Common myeloid progenitor, CD34-positive (primary cell): ENCODE measurements at regions of chr14 and their contacts with region 1.

Region 1: GRCh38 chr14:35121887-35122695 is at the starts of genes PPP2R3C and PRORP:
- DNase-seq: peak; percentile 95 to 99 (median 97)
- H3K4me3 ChIP-seq: peak within 1 kb of the TSS; percentile 50 to 98 (median 92)
- H3K27ac ChIP-seq: peak within 1 kb of the TSS; percentile 99 to 100
- H3K4me1 ChIP-seq: peaks cover 7 to 29% (median 24%) of the 10 kb centered on the region in 4 experiments
- H3K27me3 ChIP-seq: no peaks in the 10 kb centered on the region

Region 2: GRCh38 chr14:35134328-35135123 is 12.4 kb after region 1 on chr14:
- CTCF ChIA-PET with region 1: interaction called, 12 read pairs
- POLR2A ChIA-PET with region 1: no interaction called
- DNase-seq: peak in 1 of 3 donors; percentile 15
- H3K4me3 ChIP-seq: no peak overlapping the region
- H3K27ac ChIP-seq: no peak overlapping the region
- H3K4me1 ChIP-seq: peaks cover 0 to 5% (median 0%) of the 10 kb centered on the region in 4 experiments
- H3K27me3 ChIP-seq: no peaks in the 10 kb centered on the region